ENCODE measurements at regions of chr6 and their contacts with region 1.

Region 1: DNA sequence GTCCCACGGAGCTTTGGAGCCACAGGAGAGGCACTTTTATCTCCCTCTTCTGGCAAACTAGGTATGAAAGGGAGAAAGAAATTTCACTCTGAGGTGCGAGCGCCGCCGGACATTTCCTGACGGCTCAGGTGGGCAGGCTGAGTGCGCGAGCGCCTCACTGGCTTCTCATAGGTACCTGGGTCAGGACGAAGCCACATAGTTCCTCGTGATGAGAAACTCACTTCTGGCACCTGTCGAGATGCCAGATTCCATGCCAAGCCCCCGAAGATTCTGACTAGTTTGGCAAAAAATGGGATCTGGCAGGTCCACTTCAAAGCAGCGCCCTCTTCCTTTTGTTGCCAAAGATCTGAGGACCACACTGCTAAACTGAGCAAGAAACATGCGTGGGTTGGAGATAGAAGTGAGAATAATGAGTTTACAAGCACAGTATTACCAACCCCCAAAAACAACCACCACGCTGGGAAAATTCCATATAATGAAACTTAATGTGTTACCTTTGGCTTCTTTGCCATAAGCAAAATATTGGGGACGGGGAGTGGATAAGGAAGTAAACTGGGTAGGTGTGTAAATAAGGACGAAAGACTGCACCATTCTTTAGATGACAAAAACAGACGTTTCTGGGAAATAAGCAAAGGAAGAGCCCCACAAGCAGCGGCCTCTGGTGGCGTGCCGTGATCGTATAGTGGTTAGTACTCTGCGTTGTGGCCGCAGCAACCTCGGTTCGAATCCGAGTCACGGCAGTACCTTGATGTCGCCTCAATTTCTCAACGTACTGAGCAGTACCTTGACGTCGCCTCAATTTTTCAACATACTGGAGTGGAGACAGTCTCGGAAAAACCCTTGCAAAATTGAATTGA is 89.8 kb upstream of the PRSS16 start:
- H3K4me3 ChIP-seq: peak overlapping the region; percentile 65
- H3K27ac ChIP-seq: no peak overlapping the region; the same call in 1 of the 2 replicates
- H3K4me1 ChIP-seq: no peaks in the 10 kb centered on the region
- CTCF ChIP-seq: peak; percentile 55

Region 2: GRCh38 chr6:27495386-27496135 is 337.9 kb after region 1 on chr6:
- CTCF ChIA-PET with region 1: no interaction called
- POLR2A ChIA-PET with region 1: no interaction called
- H3K4me3 ChIP-seq: peak overlapping the region; percentile 84
- H3K27ac ChIP-seq: peak overlapping the region; percentile 52; the same call in 1 of the 2 replicates
- H3K4me1 ChIP-seq: peaks cover 2% of the 10 kb centered on the region; the same call in 1 of the 2 replicates
- CTCF ChIP-seq: peak; percentile 82

Region 3: DNA sequence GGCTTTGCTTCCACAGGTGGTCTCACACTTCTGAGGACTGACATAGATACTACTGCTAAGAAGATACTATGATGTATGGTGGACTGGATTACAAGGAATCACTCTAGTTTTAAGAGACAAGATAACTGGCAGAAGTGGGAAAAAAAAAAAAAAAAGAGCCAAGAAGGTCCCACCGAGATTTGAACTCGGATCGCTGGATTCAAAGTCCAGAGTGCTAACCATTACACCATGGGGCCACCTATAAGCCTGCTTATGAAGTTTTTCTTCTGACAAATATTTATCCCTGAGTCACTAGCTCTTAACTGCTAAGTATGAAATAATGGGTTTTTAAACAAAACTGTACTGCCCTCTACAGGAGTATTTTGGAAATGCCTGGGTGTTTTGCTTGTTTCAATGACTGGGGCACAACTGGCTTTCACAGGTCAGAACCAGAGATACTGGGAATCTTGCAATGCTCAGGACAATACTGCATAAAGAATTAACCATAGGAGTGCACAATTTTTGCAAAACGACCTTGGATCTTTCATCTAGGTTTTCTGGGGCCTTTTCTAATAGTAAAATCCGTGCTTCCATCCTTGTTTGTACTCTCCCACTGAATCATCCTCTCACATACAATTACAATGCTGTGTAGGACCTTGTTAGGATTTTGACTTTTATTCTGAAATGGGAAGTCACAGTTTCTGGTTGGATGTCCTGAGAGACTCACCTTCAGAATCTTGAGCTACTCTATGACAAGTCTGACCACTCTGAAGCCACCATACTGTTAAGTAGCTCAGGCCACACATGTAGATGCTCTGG is 638.2 kb after region 1 on chr6:
- CTCF ChIA-PET with region 1: interaction called, 22 read pairs
- POLR2A ChIA-PET with region 1: interaction called, 4 read pairs
- H3K4me3 ChIP-seq: no peak overlapping the region
- H3K27ac ChIP-seq: no peak overlapping the region
- H3K4me1 ChIP-seq: no peaks in the 10 kb centered on the region
- CTCF ChIP-seq: peak; percentile 74

Measured in HEK293 (cell line).